ENCODE measurements at regions of chr6 and their contacts with region 1.

Region 1: DNA sequence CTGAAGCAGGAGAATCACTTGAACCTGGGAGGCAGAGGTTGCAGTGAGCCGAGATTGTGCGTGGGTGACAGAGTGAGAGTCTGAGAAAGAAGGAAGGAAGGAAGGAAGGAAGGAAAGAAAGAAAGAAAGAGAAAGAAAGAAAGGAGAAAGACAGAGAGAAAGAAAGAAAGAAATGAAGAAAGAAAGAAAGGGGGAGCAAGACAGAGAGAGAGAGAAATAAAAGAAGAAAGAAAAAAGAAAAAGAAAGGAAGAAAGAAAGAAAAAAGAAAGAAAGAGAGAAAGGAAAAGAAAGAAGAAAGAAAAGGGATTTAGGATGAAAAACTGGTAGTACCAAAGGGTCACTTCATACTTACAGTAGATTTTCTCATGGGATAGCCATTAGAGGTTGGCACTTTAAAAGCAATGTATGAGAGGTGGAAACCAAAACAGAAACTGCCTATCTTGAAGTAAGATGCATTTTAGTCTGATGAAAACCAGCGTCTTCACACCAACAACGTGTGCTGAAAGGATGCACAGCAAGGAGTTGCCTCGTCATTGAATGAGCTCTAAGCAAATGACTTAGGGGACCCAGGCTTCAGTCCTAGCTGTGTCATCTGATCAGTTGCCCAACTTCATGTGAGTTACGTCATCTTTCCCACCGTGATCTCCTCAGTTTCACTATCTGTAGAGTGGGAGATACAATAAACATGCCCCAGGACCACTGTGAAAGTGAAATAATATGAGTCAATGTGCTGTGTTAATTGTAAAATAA is 133.9 kb upstream of the NEDD9 start:
- DNase-seq: no peak
- ATAC-seq: peak in 1 of 8 donors; percentile 5
- H3K4me3 ChIP-seq: no peak overlapping the region
- H3K27ac ChIP-seq: peak overlapping the region; percentile 76 to 92 (median 86)
- H3K4me1 ChIP-seq: peaks cover 2 to 72% (median 63%) of the 10 kb centered on the region in 9 donors
- H3K27me3 ChIP-seq: no peaks in the 10 kb centered on the region
- CTCF ChIP-seq: no peak

Region 2: GRCh38 chr6:11212625-11213024 is 153.7 kb before region 1 on chr6:
- intact Hi-C with region 1: loop called in 1 of 10 experiments (anchors 10 kb)
- DNase-seq: peak in 1 of 2 donors; percentile 73
- ATAC-seq: peak in 7 of 8 donors; percentile 31 to 74 (median 55)
- H3K4me3 ChIP-seq: no peak overlapping the region
- H3K27ac ChIP-seq: peak overlapping the region in 9 of 10 donors; percentile 55 to 90 (median 85)
- H3K4me1 ChIP-seq: peaks cover 45 to 100% (median 97%) of the 10 kb centered on the region in 9 donors
- H3K27me3 ChIP-seq: no peaks in the 10 kb centered on the region
- CTCF ChIP-seq: no peak

Region 3: GRCh38 chr6:11428895-11429294 is 62.5 kb after region 1 on chr6:
- intact Hi-C with region 1: loop called in 3 of 10 experiments (anchors 5 to 10 kb)
- DNase-seq: no peak
- ATAC-seq: peak in 2 of 8 donors; percentile 18 to 19
- H3K4me3 ChIP-seq: no peak overlapping the region
- H3K27ac ChIP-seq: peak overlapping the region; percentile 6 to 72 (median 48)
- H3K4me1 ChIP-seq: peaks cover 0 to 69% (median 60%) of the 10 kb centered on the region in 9 donors
- H3K27me3 ChIP-seq: no peaks in the 10 kb centered on the region
- CTCF ChIP-seq: no peak

Region 4: DNA sequence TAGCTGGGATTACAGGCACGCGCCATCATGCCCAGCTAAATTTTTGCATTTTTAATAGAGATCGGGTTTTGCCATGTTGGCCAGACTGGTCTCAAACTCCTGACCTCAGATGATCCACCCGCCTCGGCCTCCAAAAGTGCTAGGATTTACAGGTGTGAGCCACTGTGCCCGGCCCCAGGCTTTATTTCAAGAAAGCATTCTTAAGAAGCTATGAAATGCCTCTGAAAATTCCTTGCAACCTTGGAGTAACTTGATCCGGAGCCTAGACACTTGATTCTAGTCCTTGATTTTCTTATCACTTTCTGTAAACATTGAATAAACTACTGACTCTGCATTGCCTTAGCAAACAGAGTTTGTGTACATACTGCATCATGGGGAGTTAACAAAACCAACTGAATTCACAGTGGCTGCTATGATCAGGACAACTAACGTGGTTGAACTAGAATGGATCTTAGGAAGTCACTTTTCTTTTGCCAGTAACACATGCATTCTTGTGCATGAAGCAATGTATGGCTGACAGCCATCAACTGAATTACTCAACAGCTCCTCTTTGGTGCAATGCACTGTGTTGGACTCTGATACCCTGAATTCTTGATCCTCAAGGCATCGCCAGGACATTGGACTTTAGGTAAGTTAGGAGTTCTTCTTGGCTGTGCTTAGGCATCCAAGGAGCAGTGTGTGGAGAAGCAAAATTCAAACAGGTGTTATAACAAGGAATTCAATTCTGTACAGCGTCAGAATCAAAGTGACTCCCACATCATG is 68.4 kb after region 1 on chr6:
- intact Hi-C with region 1: loop called in 3 of 10 experiments (anchors 5 to 10 kb)
- DNase-seq: no peak
- ATAC-seq: peak in 1 of 8 donors; percentile 26
- H3K4me3 ChIP-seq: no peak overlapping the region
- H3K27ac ChIP-seq: peak overlapping the region in 4 of 10 donors; percentile 55 to 81 (median 78)
- H3K4me1 ChIP-seq: peaks cover 9 to 61% (median 31%) of the 10 kb centered on the region in 9 donors
- H3K27me3 ChIP-seq: no peaks in the 10 kb centered on the region
- CTCF ChIP-seq: no peak

Measured in heart right ventricle (tissue), 16 donors.